ENCODE measurements at regions of chr10 and their contacts with region 1.

Region 1: GRCh38 chr10:86489960-86490612 is 31.5 kb downstream of the WAPL start:
- DNase-seq: no peak
- ATAC-seq: no peak
- H3K4me3 ChIP-seq: no peak overlapping the region
- H3K4me3 Mint-ChIP-seq: no peak overlapping the region
- H3K27ac ChIP-seq: no peak overlapping the region
- H3K27ac Mint-ChIP-seq: no peak overlapping the region
- H3K4me1 ChIP-seq: no peaks in the 10 kb centered on the region
- H3K4me1 Mint-ChIP-seq: peaks cover 15 to 27% (median 17%) of the 10 kb centered on the region in 3 donors
- H3K27me3 ChIP-seq: no peaks in the 10 kb centered on the region
- H3K27me3 Mint-ChIP-seq: no peaks in the 10 kb centered on the region

Region 2: DNA sequence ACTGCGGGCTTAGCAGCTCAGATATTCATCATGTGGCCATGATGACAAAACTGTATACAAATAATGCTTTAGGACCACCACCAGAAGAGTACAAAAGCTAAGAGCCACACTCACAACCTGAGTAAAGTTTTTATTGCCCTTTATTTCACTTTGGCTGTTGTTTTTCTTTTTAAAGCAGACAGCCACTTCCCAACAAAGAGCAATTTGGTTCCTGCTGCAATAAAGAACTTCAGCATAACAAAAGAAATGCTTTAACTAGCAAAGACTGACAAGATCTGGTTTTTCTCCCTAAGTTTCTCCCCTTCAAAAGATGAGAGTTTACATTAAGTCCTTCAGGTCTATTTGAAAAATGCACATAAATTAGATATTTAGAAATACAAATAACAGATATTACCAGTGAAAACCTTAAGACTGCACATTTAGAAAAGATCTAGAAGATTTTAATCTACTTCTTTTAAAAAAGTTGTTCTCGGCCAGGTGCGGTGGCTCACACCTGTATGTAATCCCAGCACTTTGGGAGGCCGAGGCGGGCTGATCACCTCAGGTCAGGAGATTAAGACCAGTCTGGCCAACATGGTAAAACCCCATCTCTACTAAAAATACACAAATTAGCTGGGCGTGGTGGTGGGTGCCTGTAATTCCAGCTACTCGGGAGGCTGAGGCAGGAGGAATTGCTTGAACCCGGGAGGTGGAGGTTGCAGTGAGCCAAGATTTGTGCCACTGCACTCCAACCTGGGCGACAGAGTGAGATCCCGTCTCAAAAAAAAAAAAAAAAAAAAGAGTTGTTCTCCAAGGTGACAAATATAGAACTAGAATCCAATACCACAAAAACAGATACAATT is 27.9 kb before region 1 on chr10:
- CTCF ChIA-PET with region 1: no interaction called
- POLR2A ChIA-PET with region 1: interaction called in 1 of 2 experiments, 10 read pairs
- DNase-seq: no peak
- ATAC-seq: no peak
- H3K4me3 ChIP-seq: no peak overlapping the region
- H3K4me3 Mint-ChIP-seq: no peak overlapping the region
- H3K27ac ChIP-seq: no peak overlapping the region
- H3K27ac Mint-ChIP-seq: peak overlapping the region; percentile 12 to 17
- H3K4me1 ChIP-seq: no peaks in the 10 kb centered on the region
- H3K4me1 Mint-ChIP-seq: no peaks in the 10 kb centered on the region
- H3K27me3 ChIP-seq: no peaks in the 10 kb centered on the region
- H3K27me3 Mint-ChIP-seq: no peaks in the 10 kb centered on the region

Measured in T-cell (primary cell).